CD4-positive, alpha-beta T cell (primary cell): ENCODE measurements at regions of chr11 and their contacts with region 1.

Region 1: DNA sequence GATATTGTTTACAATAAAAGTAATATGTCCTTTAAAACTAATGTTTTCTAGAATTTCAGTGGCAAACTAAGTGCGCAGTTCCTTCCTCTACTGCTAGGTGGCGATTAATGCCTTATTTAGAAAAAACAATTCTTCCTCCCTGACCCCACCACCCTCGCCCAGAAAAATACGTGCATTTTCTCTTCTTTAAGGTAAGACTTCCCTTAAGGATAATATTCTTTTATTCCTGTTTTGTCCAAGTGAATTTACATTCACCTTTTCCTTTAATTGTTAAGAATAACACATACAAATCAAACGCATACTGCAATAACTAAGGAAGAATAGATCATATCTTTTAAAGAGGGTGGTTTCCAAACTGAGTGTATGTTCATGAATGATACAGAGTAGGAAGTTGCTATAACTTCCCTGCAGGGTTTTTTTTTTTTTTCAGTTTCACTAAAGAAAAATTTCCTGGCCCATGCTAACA is 17.0 kb upstream of the PSMA1 start:
- DNase-seq: peak in 13 of 14 experiments; percentile 11 to 75 (median 37)
- ATAC-seq: peak; percentile 94
- H3K4me3 ChIP-seq: peak overlapping the region; percentile 7
- H3K4me3 Mint-ChIP-seq: peak overlapping the region; percentile 63
- H3K27ac ChIP-seq: no peak overlapping the region
- H3K27ac Mint-ChIP-seq: peak overlapping the region; percentile 63
- H3K4me1 ChIP-seq: peaks cover 7% of the 10 kb centered on the region
- H3K4me1 Mint-ChIP-seq: peaks cover 39% of the 10 kb centered on the region
- H3K27me3 ChIP-seq: no peaks in the 10 kb centered on the region
- H3K27me3 Mint-ChIP-seq: no peaks in the 10 kb centered on the region
- CTCF ChIP-seq: peak; percentile 96

Region 2: DNA sequence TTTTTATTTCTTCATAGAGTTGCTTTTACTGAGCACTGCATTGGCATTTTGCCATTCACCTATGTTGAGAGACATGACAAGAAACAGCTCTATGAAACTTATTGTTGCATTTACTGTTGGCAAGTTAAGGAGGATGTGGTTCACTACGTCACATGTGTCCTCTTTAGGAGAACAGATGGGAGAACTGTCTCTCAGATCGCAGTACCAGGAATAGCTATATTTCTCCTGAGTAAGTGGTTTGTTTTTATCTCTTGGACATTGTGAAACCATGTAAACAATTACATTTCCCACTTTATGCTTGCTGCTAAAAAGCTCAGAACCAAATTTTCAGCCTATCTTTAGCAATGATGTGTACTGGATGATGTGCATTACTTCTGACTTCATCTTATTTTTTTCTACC is 17.8 kb after region 1 on chr11:
- CTCF ChIA-PET with region 1: interaction called, 3 read pairs
- POLR2A ChIA-PET with region 1: interaction called, 4 read pairs
- intact Hi-C with region 1: loop called in 1 of 2 experiments (anchors 2 kb)
- DNase-seq: peak in 8 of 14 experiments; percentile 7 to 89 (median 46)
- ATAC-seq: peak; percentile 90
- H3K4me3 ChIP-seq: no peak overlapping the region
- H3K4me3 Mint-ChIP-seq: peak overlapping the region; percentile 56
- H3K27ac ChIP-seq: peak overlapping the region; percentile 35 to 51
- H3K27ac Mint-ChIP-seq: peak overlapping the region; percentile 92
- H3K4me1 ChIP-seq: peaks cover 3% of the 10 kb centered on the region
- H3K4me1 Mint-ChIP-seq: peaks cover 47% of the 10 kb centered on the region
- H3K27me3 ChIP-seq: no peaks in the 10 kb centered on the region
- H3K27me3 Mint-ChIP-seq: no peaks in the 10 kb centered on the region
- CTCF ChIP-seq: no peak

Region 3: GRCh38 chr11:14773755-14774154 is 236.6 kb after region 1 on chr11:
- CTCF ChIA-PET with region 1: no interaction called
- POLR2A ChIA-PET with region 1: no interaction called
- intact Hi-C with region 1: loop called (anchors 2 to 5 kb)
- DNase-seq: peak in 3 of 14 experiments; percentile 43 to 61 (median 60)
- ATAC-seq: peak; percentile 68
- H3K4me3 ChIP-seq: no peak overlapping the region
- H3K4me3 Mint-ChIP-seq: peak overlapping the region; percentile 25
- H3K27ac ChIP-seq: no peak overlapping the region
- H3K27ac Mint-ChIP-seq: peak overlapping the region; percentile 21
- H3K4me1 ChIP-seq: peaks cover 5% of the 10 kb centered on the region
- H3K4me1 Mint-ChIP-seq: peaks cover 68% of the 10 kb centered on the region
- H3K27me3 ChIP-seq: no peaks in the 10 kb centered on the region
- H3K27me3 Mint-ChIP-seq: no peaks in the 10 kb centered on the region
- CTCF ChIP-seq: peak; percentile 21

Region 4: GRCh38 chr11:14789879-14790484 is 252.8 kb after region 1 on chr11:
- CTCF ChIA-PET with region 1: no interaction called
- POLR2A ChIA-PET with region 1: no interaction called
- intact Hi-C with region 1: loop called in 1 of 2 experiments (anchors 5 kb)
- DNase-seq: peak in 3 of 14 experiments; percentile 43 to 47 (median 47)
- ATAC-seq: peak; percentile 57
- H3K4me3 ChIP-seq: no peak overlapping the region
- H3K4me3 Mint-ChIP-seq: no peak overlapping the region
- H3K27ac ChIP-seq: no peak overlapping the region
- H3K27ac Mint-ChIP-seq: peak overlapping the region; percentile 27
- H3K4me1 ChIP-seq: no peaks in the 10 kb centered on the region
- H3K4me1 Mint-ChIP-seq: peaks cover 25% of the 10 kb centered on the region
- H3K27me3 ChIP-seq: no peaks in the 10 kb centered on the region
- H3K27me3 Mint-ChIP-seq: no peaks in the 10 kb centered on the region
- CTCF ChIP-seq: peak; percentile 54

Region 5: DNA sequence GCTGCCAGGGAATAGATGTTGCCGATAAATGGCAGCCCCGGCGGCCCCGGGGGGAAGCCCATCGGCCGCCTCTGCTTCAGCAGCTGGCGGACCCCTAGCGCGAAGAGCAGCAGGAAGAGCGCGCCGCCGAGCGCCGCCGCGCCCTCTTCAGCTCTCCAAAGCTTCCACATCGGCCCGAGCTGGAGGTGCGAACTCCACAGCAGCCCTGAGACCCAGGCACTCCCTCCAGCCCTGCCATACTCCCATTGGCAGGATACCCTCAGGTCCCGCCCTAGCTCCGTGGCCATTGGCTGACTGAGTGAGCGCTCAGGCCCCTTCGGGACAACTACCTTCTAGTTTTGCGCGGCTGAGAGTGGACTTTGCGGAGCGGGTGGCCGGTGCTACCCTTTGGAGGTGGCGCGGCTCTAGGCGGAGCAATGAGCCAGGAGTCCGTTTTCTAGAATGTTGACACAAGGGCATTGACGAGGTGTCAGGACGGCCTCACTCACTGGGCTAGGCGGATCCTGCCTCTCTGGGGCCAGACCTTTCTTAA is 354.9 kb after region 1 on chr11 and contains the start of gene CYP2R1:
- CTCF ChIA-PET with region 1: no interaction called
- POLR2A ChIA-PET with region 1: interaction called, 9 read pairs
- intact Hi-C with region 1: loop called in 1 of 2 experiments (anchors 5 kb)
- DNase-seq: peak; percentile 79 to 95 (median 86)
- ATAC-seq: peak; percentile 82
- H3K4me3 ChIP-seq: peak within 1 kb of the TSS; percentile 94
- H3K4me3 Mint-ChIP-seq: peak within 1 kb of the TSS; percentile 96
- H3K27ac ChIP-seq: peak within 1 kb of the TSS; percentile 81 to 88
- H3K27ac Mint-ChIP-seq: peak within 1 kb of the TSS; percentile 94
- H3K4me1 ChIP-seq: peaks cover 31% of the 10 kb centered on the region
- H3K4me1 Mint-ChIP-seq: peaks cover 35% of the 10 kb centered on the region
- H3K27me3 ChIP-seq: no peaks in the 10 kb centered on the region
- H3K27me3 Mint-ChIP-seq: no peaks in the 10 kb centered on the region
- CTCF ChIP-seq: no peak
- total RNA-seq, gene CYP2R1: 14.2 to 15.8 TPM

Region 6: DNA sequence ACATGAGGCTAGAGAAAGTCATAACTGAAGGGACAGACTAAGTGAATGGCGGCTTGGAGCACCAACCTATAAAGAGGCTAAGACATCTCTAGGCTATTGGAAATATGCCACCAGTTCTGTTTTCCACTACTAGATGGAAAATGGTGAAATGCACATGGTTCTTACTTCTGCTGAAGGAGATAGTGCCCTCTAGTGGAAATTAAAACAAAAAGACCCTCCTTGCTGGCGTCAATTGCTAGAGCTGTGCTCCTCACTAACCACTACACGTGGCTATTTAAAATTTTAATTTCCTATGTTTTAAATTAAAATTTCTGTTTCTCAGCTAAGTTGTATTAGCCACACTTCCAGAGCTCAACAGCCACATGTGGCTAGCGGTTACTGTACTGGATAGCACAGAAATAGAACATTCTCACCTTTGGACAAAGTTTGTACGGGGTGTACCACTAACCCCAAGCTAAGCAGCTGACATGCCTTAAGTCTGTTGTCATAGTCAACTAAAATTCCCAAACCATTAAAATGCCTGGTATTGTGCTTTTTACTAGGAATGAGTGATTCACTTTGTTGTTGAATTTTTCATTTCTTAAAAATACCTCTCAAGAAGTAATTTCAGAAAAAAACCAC is 469.1 kb after region 1 on chr11:
- CTCF ChIA-PET with region 1: no interaction called
- POLR2A ChIA-PET with region 1: no interaction called
- intact Hi-C with region 1: loop called in 1 of 2 experiments (anchors 5 kb)
- DNase-seq: peak in 3 of 14 experiments; percentile 55 to 57 (median 57)
- ATAC-seq: peak; percentile 54
- H3K4me3 ChIP-seq: no peak overlapping the region
- H3K4me3 Mint-ChIP-seq: no peak overlapping the region
- H3K27ac ChIP-seq: no peak overlapping the region
- H3K27ac Mint-ChIP-seq: no peak overlapping the region
- H3K4me1 ChIP-seq: no peaks in the 10 kb centered on the region
- H3K4me1 Mint-ChIP-seq: no peaks in the 10 kb centered on the region
- H3K27me3 ChIP-seq: peaks cover 0 to 19% of the 10 kb centered on the region in 2 experiments
- H3K27me3 Mint-ChIP-seq: peaks cover 64% of the 10 kb centered on the region
- CTCF ChIP-seq: peak; percentile 63

Region 7: DNA sequence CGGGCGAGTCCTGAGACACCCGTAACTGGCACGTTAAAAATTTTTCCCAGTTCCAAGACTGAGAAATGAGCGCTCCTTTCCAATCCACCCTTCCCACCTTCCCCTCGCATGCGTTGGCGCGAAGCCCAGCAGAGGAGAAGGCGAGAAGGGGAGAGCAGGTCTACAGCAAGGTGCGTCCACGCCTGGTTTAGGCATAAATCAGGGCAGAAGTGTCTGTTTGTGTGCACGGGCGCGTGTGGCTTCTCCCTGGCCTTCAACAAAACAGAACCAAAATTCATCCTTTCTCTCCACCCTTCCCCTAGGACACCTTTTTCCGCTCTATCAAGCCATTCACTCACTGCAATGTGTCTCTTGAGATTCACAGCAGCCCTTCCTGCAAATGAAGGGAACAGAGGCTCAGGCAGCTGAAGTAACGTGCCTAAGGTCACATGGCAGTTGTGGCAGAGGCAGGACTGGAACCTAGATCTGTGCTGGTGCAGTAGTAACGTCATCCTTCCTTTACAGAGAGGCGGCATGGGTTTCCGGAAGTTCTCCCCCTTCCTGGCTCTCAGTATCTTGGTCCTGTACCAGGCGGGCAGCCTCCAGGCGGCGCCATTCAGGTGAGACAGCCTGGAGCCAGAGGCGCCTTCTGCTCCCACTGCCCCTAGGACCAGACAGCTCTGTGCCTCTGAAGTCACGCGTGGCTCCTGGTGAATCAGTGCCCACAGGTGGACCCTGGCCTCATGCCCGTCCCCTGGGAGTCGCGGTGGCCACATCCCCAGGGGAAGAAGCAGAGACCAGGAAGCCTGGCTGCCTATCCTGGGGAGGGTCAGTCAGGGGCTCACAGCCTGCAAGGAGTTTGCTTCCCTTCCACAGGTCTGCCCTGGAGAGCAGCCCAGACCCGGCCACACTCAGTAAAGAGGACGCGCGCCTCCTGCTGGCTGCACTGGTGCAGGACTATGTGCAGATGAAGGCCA is 537.3 kb after region 1 on chr11:
- CTCF ChIA-PET with region 1: no interaction called
- POLR2A ChIA-PET with region 1: no interaction called
- intact Hi-C with region 1: loop called in 1 of 2 experiments (anchors 10 kb)
- DNase-seq: peak; percentile 71 to 88 (median 78)
- ATAC-seq: peak; percentile 93
- H3K4me3 ChIP-seq: peak overlapping the region; percentile 50
- H3K4me3 Mint-ChIP-seq: peak overlapping the region; percentile 88
- H3K27ac ChIP-seq: no peak overlapping the region
- H3K27ac Mint-ChIP-seq: no peak overlapping the region
- H3K4me1 ChIP-seq: peaks cover 25% of the 10 kb centered on the region
- H3K4me1 Mint-ChIP-seq: peaks cover 18% of the 10 kb centered on the region
- H3K27me3 ChIP-seq: peaks cover 22 to 23% of the 10 kb centered on the region in 2 experiments
- H3K27me3 Mint-ChIP-seq: peaks cover 39% of the 10 kb centered on the region
- CTCF ChIP-seq: peak; percentile 93